ENCODE measurements at regions of chr18 and their contacts with region 1.

Region 1: GRCh38 chr18:61502472-61502871 is 169.2 kb downstream of the CDH20 start:
- DNase-seq: peak in 1 of 2 donors; percentile 82
- H3K4me3 ChIP-seq: no peak overlapping the region
- H3K27ac ChIP-seq: no peak overlapping the region
- H3K4me1 ChIP-seq: no peaks in the 10 kb centered on the region
- H3K27me3 ChIP-seq: peaks cover 0 to 11% (median 0%) of the 10 kb centered on the region in 3 donors
- CTCF ChIP-seq: peak in 5 of 7 experiments; percentile 27 to 53 (median 40)
- EP300 ChIP-seq: no peak
- POLR2A ChIP-seq: no peak

Region 2: DNA sequence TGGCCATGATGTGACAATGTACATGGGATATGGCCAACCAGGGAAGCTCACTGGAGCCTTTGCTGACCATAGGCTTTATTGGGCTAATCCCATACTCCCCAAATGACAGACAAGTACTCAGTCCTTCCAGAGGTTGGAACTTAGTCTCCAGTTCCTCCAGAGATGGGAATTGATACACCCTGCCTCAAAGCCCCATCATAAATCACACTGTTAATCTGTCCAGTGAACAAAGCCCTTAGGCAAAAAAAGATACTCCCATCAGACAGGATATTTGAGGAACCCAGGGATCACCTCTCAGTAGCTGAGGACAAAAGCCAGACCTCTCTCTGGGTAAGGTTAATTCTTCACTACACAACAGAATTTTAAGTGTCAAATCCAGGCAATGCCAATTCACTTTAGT is 416.7 kb before region 1 on chr18:
- intact Hi-C with region 1: loop called (anchors 10 kb)
- DNase-seq: no peak
- H3K4me3 ChIP-seq: no peak overlapping the region
- H3K27ac ChIP-seq: no peak overlapping the region
- H3K4me1 ChIP-seq: no peaks in the 10 kb centered on the region
- H3K27me3 ChIP-seq: no peaks in the 10 kb centered on the region
- CTCF ChIP-seq: no peak
- EP300 ChIP-seq: no peak
- POLR2A ChIP-seq: no peak

Region 3: GRCh38 chr18:61322265-61322873 is 180.1 kb before region 1 on chr18:
- intact Hi-C with region 1: no loop called
- DNase-seq: peak; percentile 44 to 52
- H3K4me3 ChIP-seq: no peak overlapping the region
- H3K27ac ChIP-seq: no peak overlapping the region
- H3K4me1 ChIP-seq: no peaks in the 10 kb centered on the region
- H3K27me3 ChIP-seq: no peaks in the 10 kb centered on the region
- CTCF ChIP-seq: peak in 4 of 7 experiments; percentile 9 to 31 (median 23)
- EP300 ChIP-seq: no peak
- POLR2A ChIP-seq: no peak

Region 4: GRCh38 chr18:61350578-61350977 is 151.9 kb before region 1 on chr18:
- intact Hi-C with region 1: no loop called
- DNase-seq: no peak
- H3K4me3 ChIP-seq: no peak overlapping the region
- H3K27ac ChIP-seq: no peak overlapping the region
- H3K4me1 ChIP-seq: no peaks in the 10 kb centered on the region
- H3K27me3 ChIP-seq: no peaks in the 10 kb centered on the region
- CTCF ChIP-seq: no peak
- EP300 ChIP-seq: no peak
- POLR2A ChIP-seq: no peak

Region 5: DNA sequence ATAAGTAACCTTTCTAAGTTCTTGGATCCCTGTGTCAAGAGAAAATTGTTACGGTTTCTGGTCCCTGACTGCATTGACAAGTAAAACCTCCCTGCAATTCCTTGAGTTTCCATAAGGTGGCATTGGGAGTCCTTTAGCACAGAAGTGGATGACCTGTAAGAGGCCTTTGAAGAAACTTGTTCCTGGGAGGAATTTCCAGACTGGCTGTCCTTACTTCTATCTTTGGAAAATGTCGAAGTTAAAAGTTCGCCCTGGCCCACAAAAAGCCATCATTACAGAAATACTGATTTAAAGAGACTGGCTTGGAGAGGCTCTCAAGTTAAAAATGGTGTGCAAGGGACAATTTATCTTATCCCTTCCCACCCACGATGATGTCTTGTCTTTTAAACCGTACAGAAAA is 49.1 kb after region 1 on chr18:
- intact Hi-C with region 1: no loop called
- DNase-seq: peak in 1 of 2 donors; percentile 86
- H3K4me3 ChIP-seq: no peak overlapping the region
- H3K27ac ChIP-seq: no peak overlapping the region
- H3K4me1 ChIP-seq: no peaks in the 10 kb centered on the region
- H3K27me3 ChIP-seq: no peaks in the 10 kb centered on the region
- CTCF ChIP-seq: peak in 5 of 7 experiments; percentile 56 to 88 (median 80)
- EP300 ChIP-seq: no peak
- POLR2A ChIP-seq: no peak

Region 6: GRCh38 chr18:61596296-61596695 is 93.8 kb after region 1 on chr18:
- intact Hi-C with region 1: no loop called
- DNase-seq: peak in 1 of 2 donors; percentile 49
- H3K4me3 ChIP-seq: no peak overlapping the region
- H3K27ac ChIP-seq: no peak overlapping the region
- H3K4me1 ChIP-seq: no peaks in the 10 kb centered on the region
- H3K27me3 ChIP-seq: no peaks in the 10 kb centered on the region
- CTCF ChIP-seq: no peak
- EP300 ChIP-seq: no peak
- POLR2A ChIP-seq: no peak